ENCODE measurements at regions of chr12 and their contacts with region 1.

Region 1: DNA sequence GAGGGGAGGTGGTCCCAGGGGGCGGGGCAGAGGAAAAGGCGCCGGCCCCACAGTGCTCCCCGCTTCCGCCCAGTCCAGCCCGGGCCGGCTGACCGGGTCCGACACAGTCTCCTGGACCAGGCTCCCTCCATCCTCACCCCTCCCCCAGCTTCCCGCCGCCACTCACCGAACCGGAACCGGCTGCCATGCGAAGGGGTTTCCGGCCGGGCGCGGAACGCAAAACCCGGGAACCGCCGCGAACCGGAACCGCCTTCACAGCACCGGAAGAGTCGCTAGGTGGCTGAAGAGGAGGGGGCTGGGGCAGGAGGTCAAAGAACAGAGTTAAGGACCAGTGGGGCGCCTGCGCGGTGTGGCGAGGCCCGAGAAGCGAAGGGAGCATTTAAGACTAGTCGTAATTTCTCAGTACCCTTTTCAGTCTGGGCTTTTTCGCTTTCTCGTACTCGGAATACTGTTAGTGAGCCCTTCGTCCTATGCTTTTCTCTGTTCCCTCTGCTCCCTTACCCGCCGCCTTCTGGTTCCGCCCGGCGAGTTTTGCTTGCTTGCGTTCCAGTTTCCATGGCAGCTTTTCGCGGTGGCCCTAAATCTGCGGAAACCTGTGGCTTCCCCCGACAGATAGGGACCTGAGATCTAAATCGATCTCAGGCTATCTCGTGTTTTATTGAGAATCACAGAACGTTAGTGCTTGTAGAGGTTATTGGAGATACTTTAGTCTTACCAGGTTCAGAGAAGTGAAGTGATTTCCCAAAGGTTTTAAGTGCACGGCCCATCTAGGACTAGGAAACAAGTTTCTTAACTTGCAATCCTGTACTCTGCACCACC is at the start of gene SENP1:
- DNase-seq: peak; percentile 57
- H3K4me3 ChIP-seq: peak within 1 kb of the TSS; percentile 57
- H3K27ac ChIP-seq: peak within 1 kb of the TSS; percentile 96
- H3K27me3 ChIP-seq: peaks cover 8% of the 10 kb centered on the region
- CTCF ChIP-seq: 0 out of 2 replicates have a peak, but pooled peaks have one; percentile 16
- polyA plus RNA-seq, gene SENP1: 23.4 and 26.4 TPM in 2 replicates

Region 2: GRCh38 chr12:48119078-48119833 is 13.2 kb after region 1 on chr12 and contains the start of gene PFKM:
- CTCF ChIA-PET with region 1: interaction called, 4 read pairs
- POLR2A ChIA-PET with region 1: interaction called, 14 read pairs
- DNase-seq: peak; percentile 66
- H3K4me3 ChIP-seq: peak within 1 kb of the TSS; percentile 97
- H3K27ac ChIP-seq: peak within 1 kb of the TSS; percentile 63
- H3K27me3 ChIP-seq: peaks cover 8% of the 10 kb centered on the region
- CTCF ChIP-seq: no peak
- polyA plus RNA-seq, gene PFKM: 58.4 and 62.1 TPM in 2 replicates

Region 3: DNA sequence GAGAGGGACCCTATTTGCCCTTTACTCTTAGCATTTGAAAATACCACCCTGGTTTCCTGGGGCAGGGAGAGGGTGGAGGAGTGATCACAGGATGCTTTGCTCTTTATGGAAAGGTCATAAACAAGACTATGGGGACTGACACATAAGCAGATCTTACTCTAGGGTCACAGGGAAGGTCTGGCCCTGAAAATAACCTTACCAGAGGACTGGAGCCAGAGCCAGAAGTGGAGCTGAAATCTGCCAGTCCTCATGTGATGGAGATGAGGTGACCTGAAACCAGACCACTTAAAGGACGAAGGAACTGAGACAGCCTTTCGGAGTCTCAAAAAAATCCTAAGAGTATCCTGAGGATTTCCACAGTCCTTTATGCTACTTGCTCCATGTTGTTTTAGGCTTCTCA is 25.4 kb after region 1 on chr12:
- CTCF ChIA-PET with region 1: no interaction called
- POLR2A ChIA-PET with region 1: no interaction called
- DNase-seq: no peak
- H3K4me3 ChIP-seq: no peak overlapping the region
- H3K27ac ChIP-seq: no peak overlapping the region
- H3K27me3 ChIP-seq: no peaks in the 10 kb centered on the region
- CTCF ChIP-seq: no peak

Region 4: GRCh38 chr12:49366652-49367380 is 1260.7 kb after region 1 on chr12:
- CTCF ChIA-PET with region 1: no interaction called
- POLR2A ChIA-PET with region 1: no interaction called
- DNase-seq: peak; percentile 83
- H3K4me3 ChIP-seq: peak overlapping the region; percentile 68
- H3K27ac ChIP-seq: peak overlapping the region; percentile 93
- H3K27me3 ChIP-seq: no peaks in the 10 kb centered on the region
- CTCF ChIP-seq: peak; percentile 25